ENCODE measurements at regions of chr4 and their contacts with region 1.

Region 1: GRCh38 chr4:77742054-77742453 is 77.1 kb downstream of the CNOT6L start:
- DNase-seq: no peak
- ATAC-seq: no peak
- H3K4me3 Mint-ChIP-seq: no peak overlapping the region
- H3K27ac Mint-ChIP-seq: no peak overlapping the region
- H3K4me1 Mint-ChIP-seq: peaks cover 41% of the 10 kb centered on the region
- H3K27me3 Mint-ChIP-seq: no peaks in the 10 kb centered on the region

Region 2: GRCh38 chr4:77248810-77249209 is 493.2 kb before region 1 on chr4:
- CTCF ChIA-PET with region 1: no interaction called
- POLR2A ChIA-PET with region 1: no interaction called
- intact Hi-C with region 1: no loop called
- DNase-seq: no peak
- ATAC-seq: no peak
- H3K4me3 Mint-ChIP-seq: no peak overlapping the region
- H3K27ac Mint-ChIP-seq: no peak overlapping the region
- H3K4me1 Mint-ChIP-seq: no peaks in the 10 kb centered on the region
- H3K27me3 Mint-ChIP-seq: peaks cover 1% of the 10 kb centered on the region

Region 3: GRCh38 chr4:77586951-77587383 is 155.1 kb before region 1 on chr4:
- CTCF ChIA-PET with region 1: no interaction called
- POLR2A ChIA-PET with region 1: no interaction called
- intact Hi-C with region 1: no loop called
- DNase-seq: peak; percentile 87
- ATAC-seq: peak; percentile 94
- H3K4me3 Mint-ChIP-seq: peak overlapping the region; percentile 54
- H3K27ac Mint-ChIP-seq: peak overlapping the region; percentile 84
- H3K4me1 Mint-ChIP-seq: peaks cover 66% of the 10 kb centered on the region
- H3K27me3 Mint-ChIP-seq: peaks cover 16% of the 10 kb centered on the region

Region 4: DNA sequence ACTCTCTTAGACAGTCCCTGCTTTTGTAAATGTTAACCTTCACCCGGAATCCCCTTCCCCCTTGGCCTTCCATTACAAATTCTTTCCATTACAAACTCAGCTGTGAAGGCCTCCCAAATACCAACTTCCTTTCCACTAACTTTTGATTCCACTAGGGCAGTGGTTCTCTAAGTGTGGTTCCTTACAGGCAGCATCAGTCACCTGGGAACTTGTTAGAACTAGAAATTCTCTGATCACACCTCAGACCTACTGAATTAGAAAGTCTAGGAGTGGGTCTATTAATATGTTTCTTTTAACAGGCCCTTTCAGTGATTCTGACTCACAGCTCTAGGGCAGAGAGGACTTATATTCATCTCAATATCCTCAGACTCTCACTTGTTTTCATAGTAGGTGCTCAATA is 101.6 kb after region 1 on chr4:
- CTCF ChIA-PET with region 1: no interaction called
- POLR2A ChIA-PET with region 1: no interaction called
- intact Hi-C with region 1: no loop called
- DNase-seq: no peak
- ATAC-seq: peak; percentile 88
- H3K4me3 Mint-ChIP-seq: no peak overlapping the region
- H3K27ac Mint-ChIP-seq: peak overlapping the region; percentile 56
- H3K4me1 Mint-ChIP-seq: peaks cover 25% of the 10 kb centered on the region
- H3K27me3 Mint-ChIP-seq: no peaks in the 10 kb centered on the region

Region 5: DNA sequence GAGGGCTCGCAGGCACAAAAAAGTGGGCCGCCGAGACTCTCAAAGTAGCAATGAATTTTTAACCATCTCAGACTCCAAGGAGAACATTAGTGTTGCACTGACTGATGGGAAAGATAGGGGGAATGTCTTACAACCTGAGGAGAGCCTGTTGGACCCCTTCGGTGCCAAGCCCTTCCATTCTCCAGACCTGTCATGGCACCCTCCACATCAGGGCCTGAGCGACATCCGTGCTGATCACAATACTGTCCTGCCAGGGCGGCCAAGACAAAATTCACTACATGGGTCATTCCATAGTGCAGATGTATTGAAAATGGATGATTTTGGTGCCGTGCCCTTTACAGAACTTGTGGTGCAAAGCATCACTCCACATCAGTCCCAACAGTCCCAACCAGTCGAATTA is 1169.5 kb after region 1 on chr4:
- CTCF ChIA-PET with region 1: no interaction called
- POLR2A ChIA-PET with region 1: interaction called, 10 read pairs
- intact Hi-C with region 1: no loop called
- DNase-seq: no peak
- ATAC-seq: no peak
- H3K4me3 Mint-ChIP-seq: no peak overlapping the region
- H3K27ac Mint-ChIP-seq: no peak overlapping the region
- H3K4me1 Mint-ChIP-seq: no peaks in the 10 kb centered on the region
- H3K27me3 Mint-ChIP-seq: no peaks in the 10 kb centered on the region